ENCODE measurements at regions of chr21 and their contacts with region 1.

Region 1: GRCh38 chr21:32653311-32653901 is 41.2 kb upstream of the CFAP298 start:
- DNase-seq: peak; percentile 23 to 40
- H3K4me3 ChIP-seq: no peak overlapping the region
- H3K4me1 ChIP-seq: no peaks in the 10 kb centered on the region
- H3K27me3 ChIP-seq: no peaks in the 10 kb centered on the region

Region 2: DNA sequence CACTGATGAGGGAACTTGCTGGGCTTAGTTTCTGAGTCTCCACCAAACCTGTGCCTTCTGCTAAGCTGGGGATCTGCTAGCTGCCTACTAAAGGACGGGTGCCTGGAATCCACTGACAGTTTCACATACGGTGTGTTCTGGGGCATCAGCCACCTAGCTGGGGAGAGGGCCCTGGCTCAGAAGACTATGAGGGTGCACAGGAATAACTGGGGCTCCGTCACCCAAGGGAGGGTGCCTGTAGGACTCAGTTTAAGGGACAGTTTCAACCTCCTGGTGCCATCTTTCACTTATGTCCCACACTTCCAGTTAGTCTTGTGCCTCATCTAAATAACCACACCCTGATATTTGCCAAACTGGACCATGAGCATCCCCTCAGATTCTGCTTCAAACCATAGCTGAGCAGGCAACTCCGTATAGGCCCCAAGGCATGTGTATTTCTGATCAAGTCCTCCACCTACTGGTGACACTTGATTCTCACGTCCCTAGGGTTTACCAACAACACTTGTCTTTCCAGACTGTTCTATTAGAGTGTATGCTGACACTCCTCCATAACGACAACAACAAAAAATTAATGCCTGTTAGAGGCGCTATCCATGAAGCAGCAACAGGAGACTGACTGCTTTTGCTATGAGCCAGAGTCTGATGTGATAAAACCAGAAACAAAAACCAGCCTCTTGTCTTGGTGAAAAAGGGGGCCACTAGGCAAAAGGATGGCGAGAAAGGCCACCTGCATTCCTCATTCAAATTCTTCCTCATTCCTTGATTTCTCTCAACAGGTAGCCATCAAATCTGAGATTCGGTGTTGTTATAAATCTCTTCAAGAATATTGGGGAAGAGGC is 173.1 kb after region 1 on chr21:
- in situ Hi-C with region 1: loop called (anchors 10 kb)
- DNase-seq: peak; percentile 56 to 60
- H3K4me3 ChIP-seq: no peak overlapping the region
- H3K4me1 ChIP-seq: no peaks in the 10 kb centered on the region
- H3K27me3 ChIP-seq: no peaks in the 10 kb centered on the region

Measured in HAP-1 (cell line).